ENCODE measurements at regions of chr2 and their contacts with region 1.

Region 1: GRCh38 chr2:231583982-231584381 is 8.7 kb upstream of the TEX44 start:
- DNase-seq: no peak
- H3K4me3 ChIP-seq: no peak overlapping the region
- H3K27ac ChIP-seq: no peak overlapping the region
- H3K4me1 ChIP-seq: no peaks in the 10 kb centered on the region
- H3K27me3 ChIP-seq: no peaks in the 10 kb centered on the region
- CTCF ChIP-seq: no peak
- POLR2A ChIP-seq: no peak

Region 2: DNA sequence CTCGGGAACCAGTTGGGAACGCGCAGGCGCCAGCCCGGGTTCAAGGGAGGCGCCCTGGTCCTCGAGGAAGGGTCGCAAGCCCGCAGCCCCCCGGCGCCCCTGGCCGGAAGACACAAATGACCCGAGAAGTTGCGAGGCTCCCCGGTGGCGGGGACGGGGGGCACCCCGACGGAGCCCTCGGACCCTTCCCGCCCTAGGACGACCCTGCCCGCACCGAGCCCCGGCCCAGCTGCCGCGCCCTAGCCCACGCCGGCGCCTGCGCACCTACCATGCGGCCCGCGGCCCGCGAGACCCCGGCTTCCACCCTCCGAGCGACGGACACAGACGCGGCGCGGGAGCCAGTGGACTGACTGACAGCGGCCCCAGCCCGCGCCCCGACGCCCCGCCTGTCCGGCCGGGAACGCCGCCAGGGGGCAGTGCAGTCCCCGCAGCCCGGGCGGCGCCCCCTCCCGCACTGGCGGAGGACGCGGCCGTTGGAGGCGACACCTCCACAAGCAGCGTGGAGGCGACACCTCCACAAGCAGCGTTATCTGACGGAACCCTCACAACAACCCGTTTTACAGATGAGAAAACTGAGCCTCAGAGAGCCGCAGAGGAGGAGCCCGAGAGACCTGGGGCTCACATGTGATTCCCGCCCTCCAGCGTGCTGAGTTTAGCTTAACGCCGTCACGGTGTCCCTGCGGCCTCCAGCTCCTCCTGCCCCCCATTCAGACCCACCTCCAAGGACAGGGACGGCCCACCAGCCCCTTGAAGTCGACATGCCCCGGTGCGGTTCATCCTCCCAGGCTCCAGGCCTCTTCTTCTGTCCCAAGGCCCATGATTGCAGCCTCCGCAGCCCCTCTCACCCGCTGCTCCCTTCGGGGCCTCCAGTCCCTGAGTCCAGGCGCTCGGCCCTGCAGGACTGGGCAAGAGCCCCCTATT is 53.6 kb before region 1 on chr2 and contains the start of gene NMUR1:
- intact Hi-C with region 1: loop called (anchors 1 kb)
- DNase-seq: no peak
- H3K4me3 ChIP-seq: peak within 1 kb of the TSS; percentile 42 to 63 (median 43)
- H3K27ac ChIP-seq: no peak within 1 kb of the TSS
- H3K4me1 ChIP-seq: peaks cover 4 to 7% of the 10 kb centered on the region in 2 donors
- H3K27me3 ChIP-seq: peaks cover 0 to 10% of the 10 kb centered on the region in 2 donors
- CTCF ChIP-seq: peak in 2 of 3 donors; percentile 9 to 64
- POLR2A ChIP-seq: no peak
- total RNA-seq, gene NMUR1: under 0.01 to 3.8 TPM in 2 of 3 donors, not detected in the other

Region 3: GRCh38 chr2:231614559-231615057 is 30.6 kb after region 1 on chr2:
- intact Hi-C with region 1: no loop called
- DNase-seq: no peak
- H3K4me3 ChIP-seq: peak overlapping the region; percentile 42 to 67 (median 55)
- H3K27ac ChIP-seq: peak overlapping the region; percentile 99
- H3K4me1 ChIP-seq: peaks cover 11 to 20% of the 10 kb centered on the region in 2 donors
- H3K27me3 ChIP-seq: no peaks in the 10 kb centered on the region
- CTCF ChIP-seq: no peak
- POLR2A ChIP-seq: peak; percentile 60

Region 4: DNA sequence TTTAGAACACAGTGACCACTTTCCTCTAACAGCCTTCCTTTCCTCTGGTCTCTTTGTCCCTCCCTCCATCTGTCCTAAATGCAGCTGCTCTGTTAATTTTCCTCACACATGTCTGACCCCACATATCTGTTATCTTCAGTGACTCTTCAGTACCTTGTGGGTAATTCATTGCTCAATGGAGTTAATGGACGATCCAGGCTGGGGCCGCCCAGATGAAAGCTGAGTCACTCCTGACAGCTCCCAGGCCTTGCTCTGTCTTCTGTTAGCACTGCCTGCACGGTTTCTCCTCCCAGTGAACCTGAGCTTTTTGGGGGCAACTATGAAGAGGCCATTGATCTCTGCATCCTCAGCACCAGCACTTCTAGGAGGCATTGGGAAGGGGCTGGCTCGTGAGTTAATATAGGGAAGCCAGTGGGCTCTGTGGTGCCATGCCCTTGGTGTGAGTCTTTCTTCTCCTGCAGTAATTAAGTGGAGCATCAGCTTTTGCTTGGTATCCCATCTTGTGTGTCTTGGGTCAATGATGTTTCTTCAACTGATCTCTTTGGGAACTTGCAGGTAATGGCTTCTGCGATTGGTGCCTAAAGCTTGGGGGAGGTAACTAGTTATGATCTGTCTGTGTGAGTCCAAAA is 1353.4 kb after region 1 on chr2:
- intact Hi-C with region 1: no loop called
- DNase-seq: no peak
- H3K4me3 ChIP-seq: no peak overlapping the region
- H3K27ac ChIP-seq: no peak overlapping the region
- H3K4me1 ChIP-seq: no peaks in the 10 kb centered on the region
- H3K27me3 ChIP-seq: no peaks in the 10 kb centered on the region
- CTCF ChIP-seq: no peak
- POLR2A ChIP-seq: no peak

Measured in breast epithelium (tissue), 4 donors.